CD4-positive, alpha-beta memory T cell (primary cell): ENCODE measurements at regions of chr2 and their contacts with region 1.

Region 1: DNA sequence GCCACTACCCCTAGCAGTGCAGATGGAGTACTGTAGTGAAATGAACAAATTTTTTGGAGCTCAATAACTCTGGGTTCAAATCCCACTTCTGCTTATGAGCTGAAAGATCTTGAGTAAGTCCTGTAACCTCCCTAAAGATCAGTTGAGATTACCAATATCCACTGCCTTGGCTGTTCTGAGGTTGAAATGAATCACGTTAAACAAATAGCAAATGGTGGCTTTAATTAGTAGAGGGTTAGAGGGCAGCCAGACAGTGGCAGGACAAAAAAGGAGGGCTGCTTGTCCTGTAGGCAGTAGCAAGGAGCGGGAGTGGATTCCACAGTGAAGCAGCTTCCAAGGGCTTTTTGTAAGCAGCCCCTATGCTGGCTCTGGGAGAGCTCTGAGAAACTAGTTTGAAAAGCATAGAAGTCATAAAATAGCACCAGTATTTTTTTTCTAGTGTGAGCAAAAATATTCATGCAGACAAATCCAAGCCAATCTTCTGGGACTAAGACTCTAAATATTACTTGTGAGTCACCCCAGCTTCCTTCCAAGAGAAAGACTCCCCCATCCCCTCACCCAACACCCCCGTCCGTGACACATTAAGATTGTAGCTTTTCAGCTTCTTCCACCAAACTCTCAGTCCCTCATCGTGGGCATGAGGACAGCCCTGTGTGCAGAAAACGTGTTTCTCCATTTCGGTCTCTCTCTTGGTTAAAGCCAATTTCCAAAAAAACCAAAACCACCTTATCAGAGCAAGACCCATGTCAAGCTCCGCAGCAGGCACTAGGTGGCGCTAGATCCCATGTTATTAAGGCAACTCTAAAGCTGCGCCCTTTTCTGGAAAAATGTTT is 123.5 kb upstream of the LGALSL start:
- DNase-seq: peak; percentile 70 to 79 (median 74)
- H3K4me3 ChIP-seq: no peak overlapping the region
- H3K4me3 Mint-ChIP-seq: peak overlapping the region in 7 of 8 donors; percentile 25 to 83 (median 75)
- H3K27ac ChIP-seq: no peak overlapping the region
- H3K27ac Mint-ChIP-seq: peak overlapping the region in 6 of 7 donors; percentile 33 to 92 (median 86)
- H3K4me1 ChIP-seq: peaks cover 38% of the 10 kb centered on the region
- H3K4me1 Mint-ChIP-seq: peaks cover 28 to 46% (median 34%) of the 10 kb centered on the region in 4 donors
- H3K27me3 ChIP-seq: no peaks in the 10 kb centered on the region
- H3K27me3 Mint-ChIP-seq: no peaks in the 10 kb centered on the region

Region 2: DNA sequence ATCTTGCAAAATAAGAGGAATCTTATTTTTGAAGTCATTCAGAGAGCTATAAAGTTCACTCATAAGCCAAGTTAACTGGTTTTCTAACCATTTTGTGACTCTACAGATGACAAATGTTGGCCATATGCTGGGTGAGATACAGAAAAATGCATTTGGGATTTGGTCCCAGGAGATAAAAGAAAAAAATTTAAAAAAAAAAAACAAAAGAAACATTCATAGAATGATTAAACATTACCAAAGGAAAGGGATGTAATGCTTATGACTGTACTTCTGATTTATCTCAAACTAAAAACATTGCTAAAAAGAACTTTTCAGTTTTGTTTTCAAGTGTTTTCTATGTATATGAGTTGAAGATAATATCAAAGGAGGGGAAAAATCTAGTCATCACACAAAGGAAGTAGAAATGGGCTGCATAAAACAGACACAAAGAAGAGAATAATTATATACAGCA is 229.3 kb before region 1 on chr2:
- CTCF ChIA-PET with region 1: interaction called, 14 read pairs
- POLR2A ChIA-PET with region 1: interaction called, 4 read pairs
- intact Hi-C with region 1: no loop called
- DNase-seq: peak in 3 of 5 donors; percentile 19 to 25 (median 21)
- H3K4me3 ChIP-seq: no peak overlapping the region
- H3K4me3 Mint-ChIP-seq: peak overlapping the region in 7 of 8 donors; percentile 8 to 79 (median 59)
- H3K27ac ChIP-seq: no peak overlapping the region
- H3K27ac Mint-ChIP-seq: peak overlapping the region; percentile 24 to 86 (median 55)
- H3K4me1 ChIP-seq: peaks cover 44% of the 10 kb centered on the region
- H3K4me1 Mint-ChIP-seq: peaks cover 22 to 52% (median 30%) of the 10 kb centered on the region in 4 donors
- H3K27me3 ChIP-seq: no peaks in the 10 kb centered on the region
- H3K27me3 Mint-ChIP-seq: no peaks in the 10 kb centered on the region

Region 3: DNA sequence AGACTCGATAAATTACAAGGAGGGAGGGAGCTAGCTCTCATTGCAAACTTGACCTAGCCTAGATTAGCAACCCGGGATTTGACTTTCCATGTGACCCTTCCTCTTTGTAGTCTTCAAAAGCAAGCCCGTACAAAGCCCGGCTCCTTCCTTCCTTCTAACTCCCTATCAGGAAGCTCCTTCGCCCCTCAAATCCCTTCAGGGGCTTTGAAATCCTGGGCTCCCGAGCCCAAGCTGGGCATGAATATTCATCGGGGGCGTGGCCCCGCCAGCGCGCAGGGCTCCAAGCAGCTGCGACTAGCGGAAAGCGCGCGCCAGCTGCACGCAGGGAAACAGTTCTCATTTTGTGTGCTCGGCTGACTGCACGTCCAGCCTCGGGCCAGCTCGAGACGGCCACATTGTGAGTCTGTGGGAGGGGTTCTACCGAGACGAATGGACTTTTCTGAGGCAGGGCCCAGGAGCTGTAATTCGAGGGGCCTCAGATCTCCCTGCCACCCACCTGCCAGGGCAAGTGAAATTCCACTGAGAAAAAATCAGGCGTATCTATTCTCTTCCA is 102.3 kb before region 1 on chr2:
- CTCF ChIA-PET with region 1: interaction called, 20 read pairs
- POLR2A ChIA-PET with region 1: interaction called, 3 read pairs
- intact Hi-C with region 1: loop called (anchors 2 kb)
- DNase-seq: peak; percentile 39 to 53 (median 46)
- H3K4me3 ChIP-seq: peak overlapping the region; percentile 30 to 50
- H3K4me3 Mint-ChIP-seq: peak overlapping the region; percentile 90 to 95 (median 93)
- H3K27ac ChIP-seq: peak overlapping the region; percentile 20
- H3K27ac Mint-ChIP-seq: peak overlapping the region; percentile 74 to 96 (median 93)
- H3K4me1 ChIP-seq: peaks cover 17% of the 10 kb centered on the region
- H3K4me1 Mint-ChIP-seq: peaks cover 9 to 27% (median 16%) of the 10 kb centered on the region in 4 donors
- H3K27me3 ChIP-seq: no peaks in the 10 kb centered on the region
- H3K27me3 Mint-ChIP-seq: peaks cover 0 to 4% of the 10 kb centered on the region in 2 donors

Region 4: GRCh38 chr2:64454386-64455332 is 124.2 kb after region 1 on chr2:
- CTCF ChIA-PET with region 1: interaction called, 12 read pairs
- POLR2A ChIA-PET with region 1: no interaction called
- intact Hi-C with region 1: no loop called
- DNase-seq: peak; percentile 36 to 50 (median 46)
- H3K4me3 ChIP-seq: peak overlapping the region in 1 of 2 donors; percentile 38
- H3K4me3 Mint-ChIP-seq: peak overlapping the region; percentile 74 to 88 (median 81)
- H3K27ac ChIP-seq: no peak overlapping the region
- H3K27ac Mint-ChIP-seq: peak overlapping the region in 2 of 7 donors; percentile 41 to 53
- H3K4me1 ChIP-seq: peaks cover 9% of the 10 kb centered on the region
- H3K4me1 Mint-ChIP-seq: peaks cover 4 to 13% (median 5%) of the 10 kb centered on the region in 4 donors
- H3K27me3 ChIP-seq: no peaks in the 10 kb centered on the region
- H3K27me3 Mint-ChIP-seq: peaks cover 0 to 5% of the 10 kb centered on the region in 2 donors

Region 5: GRCh38 chr2:64562148-64562784 is 231.8 kb after region 1 on chr2:
- CTCF ChIA-PET with region 1: interaction called, 76 read pairs
- POLR2A ChIA-PET with region 1: no interaction called
- intact Hi-C with region 1: loop called (anchors 1 kb)
- DNase-seq: peak in 4 of 5 donors; percentile 42 to 52 (median 46)
- H3K4me3 ChIP-seq: no peak overlapping the region
- H3K4me3 Mint-ChIP-seq: peak overlapping the region in 1 of 8 donors; percentile 25
- H3K27ac ChIP-seq: no peak overlapping the region
- H3K27ac Mint-ChIP-seq: peak overlapping the region in 3 of 7 donors; percentile 10 to 60 (median 43)
- H3K4me1 ChIP-seq: peaks cover 22% of the 10 kb centered on the region
- H3K4me1 Mint-ChIP-seq: peaks cover 17 to 43% (median 25%) of the 10 kb centered on the region in 4 donors
- H3K27me3 ChIP-seq: no peaks in the 10 kb centered on the region
- H3K27me3 Mint-ChIP-seq: no peaks in the 10 kb centered on the region

Region 6: DNA sequence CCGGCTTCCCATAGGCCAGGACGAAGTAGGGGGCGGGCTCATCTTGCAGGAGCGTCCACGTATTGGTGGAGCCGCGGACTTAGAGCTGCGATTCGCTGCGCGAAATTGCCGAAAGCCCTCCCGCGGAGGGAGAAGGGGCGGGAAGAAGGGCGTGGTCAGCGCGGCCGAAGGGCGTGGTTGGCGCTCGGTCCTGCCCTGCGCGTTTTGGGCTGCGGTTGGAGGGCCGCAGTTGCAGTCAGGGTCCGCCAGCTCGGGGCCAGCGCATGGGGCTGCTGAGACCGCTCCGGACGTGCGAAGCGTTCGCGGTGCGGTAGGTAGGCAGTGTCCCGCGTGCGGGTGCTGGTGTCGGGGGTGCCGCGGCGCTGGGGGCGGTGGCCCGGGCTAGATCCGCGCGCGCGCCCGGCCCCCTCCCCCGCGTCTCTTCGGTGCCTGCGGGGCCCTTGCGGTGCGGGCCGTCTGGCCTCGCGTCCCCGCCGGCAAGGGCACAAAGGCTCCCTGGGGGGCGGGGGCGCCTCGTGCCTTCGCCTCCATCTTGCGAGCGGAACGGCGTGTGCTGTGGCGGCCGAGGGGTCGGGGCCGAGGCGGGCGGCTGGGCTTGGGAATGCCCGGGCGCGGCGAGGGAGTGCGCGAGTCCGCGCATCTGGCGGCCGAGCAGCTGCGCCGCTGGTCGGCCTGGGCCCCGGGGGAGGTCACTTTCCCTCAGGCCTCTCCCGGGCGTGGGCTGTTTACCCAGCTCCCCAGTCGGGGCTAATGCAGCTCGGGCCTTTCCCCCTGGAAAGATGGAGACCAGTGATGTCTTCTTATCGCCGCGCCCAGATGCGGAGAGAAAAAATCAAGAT is 725.9 kb after region 1 on chr2 and contains the start of gene CEP68:
- CTCF ChIA-PET with region 1: interaction called, 4 read pairs
- POLR2A ChIA-PET with region 1: no interaction called
- intact Hi-C with region 1: loop called (anchors 5 kb)
- DNase-seq: peak; percentile 94 to 97 (median 95)
- H3K4me3 ChIP-seq: peak within 1 kb of the TSS; percentile 83 to 92
- H3K4me3 Mint-ChIP-seq: peak within 1 kb of the TSS; percentile 90 to 98 (median 97)
- H3K27ac ChIP-seq: peak within 1 kb of the TSS; percentile 67
- H3K27ac Mint-ChIP-seq: peak within 1 kb of the TSS; percentile 94 to 98 (median 97)
- H3K4me1 ChIP-seq: peaks cover 73% of the 10 kb centered on the region
- H3K4me1 Mint-ChIP-seq: peaks cover 35 to 77% (median 46%) of the 10 kb centered on the region in 4 donors
- H3K27me3 ChIP-seq: no peaks in the 10 kb centered on the region
- H3K27me3 Mint-ChIP-seq: no peaks in the 10 kb centered on the region
- total RNA-seq, gene CEP68: 57.7 to 59.9 TPM